Activated CD4-positive, alpha-beta T cell treated with anti-CD3 and anti-CD28 coated beads for 36 hours (primary cell): ENCODE measurements at regions of chrX and their contacts with region 1.

Region 1: GRCh38 chrX:106894392-106894909 is 8.7 kb downstream of the RIPPLY1 start:
- DNase-seq: peak; percentile 66
- ATAC-seq: peak; percentile 79
- H3K4me3 Mint-ChIP-seq: no peak overlapping the region
- H3K27ac Mint-ChIP-seq: no peak overlapping the region
- H3K4me1 Mint-ChIP-seq: no peaks in the 10 kb centered on the region
- H3K27me3 Mint-ChIP-seq: peaks cover 3% of the 10 kb centered on the region

Region 2: DNA sequence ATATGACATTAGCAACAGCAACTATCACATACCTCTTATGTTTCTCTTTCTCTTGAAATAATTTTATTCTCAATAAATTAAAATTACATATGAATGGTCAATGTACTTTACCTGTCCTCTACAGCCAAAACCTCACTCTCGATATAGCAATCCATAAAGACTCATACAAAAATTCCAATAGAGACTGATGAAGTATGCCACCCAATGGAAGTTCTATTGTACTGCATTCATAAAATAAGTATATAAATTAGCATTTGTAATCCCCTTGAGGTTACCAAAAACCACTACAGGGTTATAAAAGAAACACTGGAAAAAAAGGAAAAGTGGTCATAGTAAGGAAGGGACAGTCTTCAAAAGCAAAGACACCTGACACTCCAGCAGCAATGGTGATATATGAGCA is 58.5 kb after region 1 on chrX:
- CTCF ChIA-PET with region 1: interaction called, 3 read pairs
- POLR2A ChIA-PET with region 1: no interaction called
- intact Hi-C with region 1: loop called (anchors 1 to 2 kb)
- DNase-seq: no peak
- ATAC-seq: no peak
- H3K4me3 Mint-ChIP-seq: no peak overlapping the region
- H3K27ac Mint-ChIP-seq: no peak overlapping the region
- H3K4me1 Mint-ChIP-seq: no peaks in the 10 kb centered on the region
- H3K27me3 Mint-ChIP-seq: no peaks in the 10 kb centered on the region

Region 3: DNA sequence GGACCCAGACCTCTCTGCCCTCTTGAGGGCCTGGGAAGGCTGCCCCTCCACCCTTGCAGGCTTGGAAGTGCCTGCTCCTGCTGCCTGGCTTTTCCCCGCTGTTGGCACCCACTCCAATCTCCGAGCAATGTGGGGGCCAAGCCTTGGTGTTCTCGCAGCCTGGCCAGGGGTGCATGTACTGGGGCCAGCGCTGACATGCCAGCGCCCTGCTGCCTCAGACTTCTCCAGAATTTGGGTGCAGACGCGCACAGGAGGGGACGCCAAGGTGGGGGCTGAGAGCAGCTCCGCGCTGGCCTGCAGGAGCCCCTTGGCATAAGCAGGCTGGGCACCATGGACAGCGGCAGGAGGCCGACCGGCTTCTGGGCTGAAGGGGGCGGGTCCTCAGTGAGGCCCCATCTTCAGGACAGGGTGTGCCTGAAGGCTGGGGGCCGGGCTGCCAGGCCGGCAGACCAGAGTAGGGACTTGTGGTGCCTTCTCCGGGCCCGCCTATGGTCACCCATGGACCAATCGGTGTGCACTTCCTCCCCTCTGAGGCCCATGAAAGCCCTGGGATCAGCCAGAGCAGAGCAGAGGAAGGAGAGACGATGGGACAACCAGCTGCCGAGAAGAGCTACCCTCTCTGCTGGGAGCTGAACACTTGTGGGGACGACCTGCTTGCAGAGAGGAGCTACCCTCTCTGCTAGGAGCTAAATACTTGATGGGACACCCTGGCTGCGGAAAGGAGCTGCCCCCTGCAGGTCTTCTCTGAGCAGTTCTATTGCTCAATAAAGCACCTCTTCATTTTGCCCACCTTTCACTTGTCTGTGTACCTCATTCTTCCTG is 430.3 kb after region 1 on chrX:
- CTCF ChIA-PET with region 1: interaction called, 3 read pairs
- POLR2A ChIA-PET with region 1: no interaction called
- intact Hi-C with region 1: loop called in 1 of 2 experiments (anchors 10 kb)
- DNase-seq: peak; percentile 34
- ATAC-seq: peak; percentile 30
- H3K4me3 Mint-ChIP-seq: no peak overlapping the region
- H3K27ac Mint-ChIP-seq: no peak overlapping the region
- H3K4me1 Mint-ChIP-seq: no peaks in the 10 kb centered on the region
- H3K27me3 Mint-ChIP-seq: peaks cover 2% of the 10 kb centered on the region

Region 4: GRCh38 chrX:107429090-107429489 is 534.6 kb after region 1 on chrX:
- CTCF ChIA-PET with region 1: no interaction called
- POLR2A ChIA-PET with region 1: no interaction called
- intact Hi-C with region 1: loop called in 1 of 2 experiments (anchors 2 kb)
- DNase-seq: peak; percentile 51
- ATAC-seq: no peak
- H3K4me3 Mint-ChIP-seq: no peak overlapping the region
- H3K27ac Mint-ChIP-seq: no peak overlapping the region
- H3K4me1 Mint-ChIP-seq: no peaks in the 10 kb centered on the region
- H3K27me3 Mint-ChIP-seq: no peaks in the 10 kb centered on the region

Region 5: GRCh38 chrX:107894038-107894437 is 999.6 kb after region 1 on chrX:
- CTCF ChIA-PET with region 1: no interaction called
- POLR2A ChIA-PET with region 1: no interaction called
- intact Hi-C with region 1: loop called in 1 of 2 experiments (anchors 2 kb)
- DNase-seq: peak; percentile 16
- ATAC-seq: peak; percentile 82
- H3K4me3 Mint-ChIP-seq: no peak overlapping the region
- H3K27ac Mint-ChIP-seq: no peak overlapping the region
- H3K4me1 Mint-ChIP-seq: no peaks in the 10 kb centered on the region
- H3K27me3 Mint-ChIP-seq: no peaks in the 10 kb centered on the region